HCT116 (cell line): ENCODE measurements at regions of chr22 and their contacts with region 1.

Region 1: DNA sequence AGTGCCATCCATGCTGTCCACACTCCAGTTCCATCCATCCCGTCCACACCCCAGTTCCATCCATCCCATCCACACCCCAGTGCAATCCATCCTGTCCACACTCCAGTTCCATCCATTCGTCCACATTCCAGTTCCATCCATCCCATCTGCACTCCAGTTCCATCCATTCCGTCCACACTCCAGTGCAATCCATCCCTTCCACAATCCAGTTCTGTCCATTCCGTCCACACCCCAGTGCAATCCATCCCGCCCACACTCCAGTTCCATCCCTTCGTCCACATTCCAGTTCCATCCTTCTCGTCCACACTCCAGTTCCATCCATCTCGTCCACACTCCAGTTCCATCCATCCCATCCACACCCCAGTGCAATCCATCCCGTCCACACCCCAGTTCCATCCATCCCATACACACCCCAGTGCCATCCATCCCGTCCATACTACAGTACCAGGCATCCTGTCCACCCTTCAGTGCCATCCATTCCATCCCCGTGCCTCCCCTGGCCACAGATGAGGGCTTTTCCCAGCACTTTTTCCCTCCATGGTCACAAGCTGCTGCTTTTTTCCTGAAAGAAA is 704.0 kb downstream of the BRD1 start:
- DNase-seq: no peak
- ATAC-seq: no peak
- H3K4me3 ChIP-seq: no peak overlapping the region
- H3K27ac ChIP-seq: no peak overlapping the region
- H3K4me1 ChIP-seq: no peaks in the 10 kb centered on the region
- H3K27me3 ChIP-seq: peaks cover 11% of the 10 kb centered on the region
- CTCF ChIP-seq: no peak
- POLR2A ChIP-seq: no peak
- RAD21 ChIP-seq: no peak

Region 2: DNA sequence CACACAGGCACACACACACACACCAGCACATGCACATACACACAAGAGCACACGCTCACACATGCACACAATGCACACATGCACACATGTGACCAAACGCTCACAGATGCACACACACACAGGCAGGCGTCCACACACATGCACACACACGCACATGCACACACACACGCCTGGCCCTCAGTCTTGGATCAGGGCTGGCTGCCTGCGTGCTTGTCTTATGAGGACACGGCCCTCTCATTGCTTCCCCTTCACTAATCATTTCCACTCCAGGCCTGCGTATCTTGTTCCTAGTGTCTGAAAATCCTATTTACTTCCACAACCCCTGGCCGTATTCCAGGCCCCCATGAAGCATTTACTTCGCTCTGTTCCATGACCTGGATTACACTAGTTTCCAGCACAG is 36.5 kb before region 1 on chr22:
- CTCF ChIA-PET with region 1: no interaction called
- POLR2A ChIA-PET with region 1: no interaction called
- RAD21 ChIA-PET with region 1: no interaction called
- intact Hi-C with region 1: no loop called
- DNase-seq: no peak
- ATAC-seq: no peak
- H3K4me3 ChIP-seq: no peak overlapping the region
- H3K27ac ChIP-seq: no peak overlapping the region
- H3K4me1 ChIP-seq: peaks cover 8 to 13% of the 10 kb centered on the region in 2 experiments; a peak in 3 of 4 replicates
- H3K27me3 ChIP-seq: no peaks in the 10 kb centered on the region
- CTCF ChIP-seq: no peak
- POLR2A ChIP-seq: no peak
- RAD21 ChIP-seq: no peak

Region 3: GRCh38 chr22:49139492-49140151 is 15.9 kb after region 1 on chr22:
- CTCF ChIA-PET with region 1: no interaction called
- POLR2A ChIA-PET with region 1: no interaction called
- RAD21 ChIA-PET with region 1: no interaction called
- intact Hi-C with region 1: loop called (anchors 2 kb)
- DNase-seq: no peak
- ATAC-seq: no peak
- H3K4me3 ChIP-seq: no peak overlapping the region
- H3K27ac ChIP-seq: no peak overlapping the region
- H3K4me1 ChIP-seq: no peaks in the 10 kb centered on the region
- H3K27me3 ChIP-seq: peaks cover 63% of the 10 kb centered on the region
- CTCF ChIP-seq: no peak
- POLR2A ChIP-seq: no peak
- RAD21 ChIP-seq: no peak

Region 4: GRCh38 chr22:49170053-49170452 is 46.3 kb after region 1 on chr22:
- CTCF ChIA-PET with region 1: no interaction called
- POLR2A ChIA-PET with region 1: no interaction called
- RAD21 ChIA-PET with region 1: no interaction called
- intact Hi-C with region 1: no loop called
- DNase-seq: no peak
- ATAC-seq: peak; percentile 61
- H3K4me3 ChIP-seq: no peak overlapping the region
- H3K27ac ChIP-seq: no peak overlapping the region
- H3K4me1 ChIP-seq: no peaks in the 10 kb centered on the region
- H3K27me3 ChIP-seq: peaks cover 34% of the 10 kb centered on the region; the same call in 1 of the 2 replicates
- CTCF ChIP-seq: 0 out of 6 replicates have a peak, but pooled peaks of 1 of the 3 experiments have one; percentile 24
- POLR2A ChIP-seq: no peak
- RAD21 ChIP-seq: peak; percentile 34